Heart left ventricle (tissue), 16 donors: ENCODE measurements at regions of chr2 and their contacts with region 1.

Region 1: DNA sequence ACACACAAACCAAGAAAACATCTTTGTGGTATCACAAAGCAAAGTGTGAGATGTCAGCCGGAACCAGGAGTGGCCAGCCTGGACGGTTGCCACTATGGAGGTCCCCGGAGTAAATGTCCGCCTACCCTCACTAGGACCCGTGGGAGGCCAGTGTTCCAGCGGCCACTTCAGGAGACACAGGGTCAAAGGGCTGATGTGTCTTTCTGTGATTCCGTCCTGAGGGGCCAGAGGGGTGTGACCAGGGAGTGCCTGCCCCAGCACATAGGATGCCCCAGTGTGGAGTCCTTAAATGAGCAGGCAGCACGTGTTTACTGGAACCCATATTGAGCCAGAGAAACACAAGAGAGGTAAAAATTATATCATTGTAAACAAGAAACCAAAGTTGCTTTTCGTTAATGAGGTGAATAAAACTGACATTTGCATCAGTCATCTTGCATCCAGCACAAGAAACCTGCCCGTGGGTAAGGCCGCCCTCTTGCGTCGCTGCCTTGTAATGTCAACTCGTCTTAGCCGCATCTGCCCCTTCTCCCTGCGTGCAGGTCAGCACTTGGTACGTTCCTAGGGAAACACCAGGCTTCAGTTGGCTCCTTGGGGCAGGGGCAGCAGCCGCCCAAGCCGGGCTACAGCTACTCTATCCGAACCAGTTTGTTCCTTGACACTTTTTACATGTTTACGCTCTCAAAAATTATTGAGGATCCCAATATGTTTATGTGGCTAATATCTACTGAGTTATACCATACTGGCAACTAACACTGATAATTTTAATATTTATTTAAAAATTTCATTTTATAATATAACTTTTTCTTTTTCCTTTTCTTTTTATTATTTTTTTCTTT is 46.7 kb upstream of the LAPTM4A start:
- DNase-seq: peak; percentile 70 to 90 (median 80)
- ATAC-seq: peak in 3 of 4 donors; percentile 85 to 88 (median 86)
- H3K4me3 ChIP-seq: no peak overlapping the region
- H3K27ac ChIP-seq: no peak overlapping the region
- H3K4me1 ChIP-seq: peaks cover 0 to 8% (median 2%) of the 10 kb centered on the region in 12 donors
- H3K27me3 ChIP-seq: no peaks in the 10 kb centered on the region
- CTCF ChIP-seq: peak; percentile 75 to 94 (median 90)
- POLR2A ChIP-seq: no peak

Region 2: GRCh38 chr2:19955544-19956422 is 142.3 kb before region 1 on chr2:
- intact Hi-C with region 1: loop called in 9 of 10 experiments (anchors 1 to 2 kb)
- DNase-seq: peak; percentile 48 to 57 (median 53)
- ATAC-seq: peak in 3 of 4 donors; percentile 83 to 87 (median 86)
- H3K4me3 ChIP-seq: no peak overlapping the region
- H3K27ac ChIP-seq: no peak overlapping the region
- H3K4me1 ChIP-seq: peaks cover 0 to 3% (median 0%) of the 10 kb centered on the region in 12 donors
- H3K27me3 ChIP-seq: no peaks in the 10 kb centered on the region
- CTCF ChIP-seq: peak; percentile 62 to 85 (median 76)
- POLR2A ChIP-seq: no peak

Region 3: DNA sequence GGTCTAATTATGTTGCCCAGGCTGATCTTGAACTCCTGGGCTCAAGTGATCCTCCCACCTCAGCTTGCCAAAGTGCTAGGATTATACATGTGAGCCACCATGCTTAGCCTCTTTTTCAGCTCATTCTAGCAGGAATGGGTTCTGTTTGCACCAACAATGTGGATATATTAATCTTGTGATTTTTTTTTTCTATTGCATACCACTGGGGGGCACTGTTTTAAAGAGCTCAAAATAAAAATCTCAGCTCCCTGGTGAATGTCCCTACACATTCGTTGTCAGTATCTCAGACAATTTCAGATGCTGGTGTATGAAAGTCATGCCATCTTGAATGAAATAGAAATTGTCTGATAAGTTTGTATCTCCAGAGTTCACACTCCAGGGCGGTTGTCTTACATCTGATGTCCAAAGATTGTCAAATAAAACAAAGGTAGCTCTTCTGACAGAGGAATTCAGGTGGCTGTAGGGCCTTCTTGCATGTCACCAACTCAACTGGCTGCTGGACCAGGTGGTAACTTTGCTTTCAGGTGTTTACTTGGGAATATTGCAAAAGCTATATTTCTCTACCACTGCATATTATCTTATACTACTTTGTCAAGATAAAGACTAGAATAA is 82.5 kb before region 1 on chr2:
- intact Hi-C with region 1: loop called (anchors 1 to 2 kb)
- DNase-seq: no peak
- ATAC-seq: peak in 3 of 4 donors; percentile 40 to 56 (median 55)
- H3K4me3 ChIP-seq: no peak overlapping the region
- H3K27ac ChIP-seq: no peak overlapping the region
- H3K4me1 ChIP-seq: peaks cover 0 to 16% (median 9%) of the 10 kb centered on the region in 12 donors
- H3K27me3 ChIP-seq: peaks cover 0 to 34% (median 3%) of the 10 kb centered on the region in 9 donors
- CTCF ChIP-seq: peak; percentile 44 to 72 (median 67)
- POLR2A ChIP-seq: no peak

Region 4: DNA sequence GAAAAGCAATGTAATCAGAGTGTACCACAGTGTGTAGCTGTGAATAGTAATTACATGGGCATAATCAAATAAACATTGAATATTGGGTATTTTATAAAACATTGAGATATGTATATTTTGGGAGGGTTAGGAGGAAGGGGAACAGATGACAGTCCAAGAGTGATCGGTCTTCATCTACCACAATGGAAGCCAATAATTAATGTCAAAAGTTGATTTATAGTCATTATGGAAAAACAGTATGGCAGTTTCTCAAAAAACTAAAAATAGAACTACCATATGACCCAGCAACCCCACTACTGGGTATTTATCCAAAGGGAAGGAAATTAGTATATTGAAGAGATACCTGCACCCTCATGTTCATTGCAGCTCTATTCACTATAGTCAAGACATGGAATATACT is 40.8 kb before region 1 on chr2:
- intact Hi-C with region 1: loop called in 2 of 10 experiments (anchors 5 kb)
- DNase-seq: no peak
- ATAC-seq: no peak
- H3K4me3 ChIP-seq: no peak overlapping the region
- H3K27ac ChIP-seq: no peak overlapping the region
- H3K4me1 ChIP-seq: peaks cover 0 to 19% (median 7%) of the 10 kb centered on the region in 12 donors
- H3K27me3 ChIP-seq: no peaks in the 10 kb centered on the region
- CTCF ChIP-seq: no peak
- POLR2A ChIP-seq: no peak